ENCODE measurements at regions of chr1 and their contacts with region 1.

Region 1: DNA sequence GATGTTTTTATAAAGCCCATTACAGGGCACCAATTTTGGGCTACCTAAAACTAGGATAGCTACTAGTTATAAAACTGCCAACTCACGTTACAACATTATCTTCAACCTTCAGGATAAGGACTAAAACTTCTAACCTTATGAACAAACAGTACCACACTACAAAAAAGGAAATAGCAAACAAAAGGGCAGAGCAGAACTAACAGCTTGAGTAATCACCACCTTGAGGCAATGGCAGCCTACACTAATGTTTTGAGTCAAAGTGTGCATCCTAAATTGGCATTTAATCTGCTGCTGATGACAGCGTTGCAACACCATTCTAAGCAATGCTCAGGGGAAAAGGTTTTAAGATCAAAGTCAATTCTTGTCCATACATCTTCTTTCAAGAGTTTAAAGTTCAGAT is 27.2 kb downstream of the PTP4A2 start:
- DNase-seq: peak; percentile 48
- H3K4me3 Mint-ChIP-seq: no peak overlapping the region
- H3K27ac Mint-ChIP-seq: peak overlapping the region; percentile 66
- H3K4me1 Mint-ChIP-seq: peaks cover 6% of the 10 kb centered on the region
- H3K27me3 Mint-ChIP-seq: no peaks in the 10 kb centered on the region
- CTCF ChIP-seq: no peak

Region 2: GRCh38 chr1:31897526-31898100 is 13.3 kb before region 1 on chr1:
- CTCF ChIA-PET with region 1: no interaction called
- POLR2A ChIA-PET with region 1: interaction called, 24 read pairs
- intact Hi-C with region 1: no loop called
- DNase-seq: no peak
- H3K4me3 Mint-ChIP-seq: no peak overlapping the region
- H3K27ac Mint-ChIP-seq: peak overlapping the region; percentile 57
- H3K4me1 Mint-ChIP-seq: peaks cover 11% of the 10 kb centered on the region
- H3K27me3 Mint-ChIP-seq: no peaks in the 10 kb centered on the region
- CTCF ChIP-seq: no peak

Region 3: GRCh38 chr1:31955917-31956736 is 45.2 kb after region 1 on chr1:
- CTCF ChIA-PET with region 1: interaction called, 4 read pairs
- POLR2A ChIA-PET with region 1: interaction called, 17 read pairs
- intact Hi-C with region 1: no loop called
- DNase-seq: peak; percentile 99
- H3K4me3 Mint-ChIP-seq: peak overlapping the region; percentile 39
- H3K27ac Mint-ChIP-seq: peak overlapping the region; percentile 100
- H3K4me1 Mint-ChIP-seq: peaks cover 35% of the 10 kb centered on the region
- H3K27me3 Mint-ChIP-seq: no peaks in the 10 kb centered on the region
- CTCF ChIP-seq: no peak

Region 4: DNA sequence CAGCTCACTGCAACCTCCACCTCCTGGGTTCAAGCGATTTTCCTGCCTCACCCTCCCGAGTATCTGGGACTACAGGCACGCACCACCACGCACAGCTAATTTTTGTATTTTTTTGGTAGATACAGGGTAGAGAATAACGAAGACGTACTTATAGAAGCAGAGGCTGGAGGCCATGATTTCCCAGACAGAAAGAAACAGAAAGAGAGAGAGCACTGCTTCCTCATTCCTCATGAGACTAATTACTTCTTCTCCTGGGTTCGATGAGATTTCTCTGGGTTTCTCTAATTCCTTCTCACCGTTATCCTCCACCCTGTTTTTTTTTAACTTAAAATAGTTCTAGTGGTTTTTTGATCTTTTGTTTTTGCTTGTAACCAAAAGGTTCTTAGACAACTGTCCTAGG is 50.6 kb after region 1 on chr1:
- CTCF ChIA-PET with region 1: interaction called, 17 read pairs
- POLR2A ChIA-PET with region 1: interaction called, 17 read pairs
- intact Hi-C with region 1: no loop called
- DNase-seq: no peak
- H3K4me3 Mint-ChIP-seq: no peak overlapping the region
- H3K27ac Mint-ChIP-seq: no peak overlapping the region
- H3K4me1 Mint-ChIP-seq: peaks cover 11% of the 10 kb centered on the region
- H3K27me3 Mint-ChIP-seq: no peaks in the 10 kb centered on the region
- CTCF ChIP-seq: no peak

Region 5: DNA sequence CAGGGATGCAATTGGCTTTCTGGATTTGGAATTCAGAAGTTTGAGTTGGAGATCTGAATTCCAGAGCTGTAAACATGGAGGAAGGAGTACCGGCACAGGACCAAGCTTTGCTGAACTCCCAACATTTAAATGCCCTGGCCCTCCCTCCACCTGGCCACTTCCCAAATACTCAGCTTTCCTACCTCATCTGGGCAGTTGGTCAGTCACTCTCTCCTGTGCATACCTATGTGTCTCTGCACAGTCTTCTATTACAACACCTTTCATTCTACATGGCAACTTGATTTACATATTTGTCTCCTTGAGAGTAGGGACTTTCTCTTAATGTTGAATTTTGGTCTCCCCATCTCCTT is 96.6 kb after region 1 on chr1:
- CTCF ChIA-PET with region 1: no interaction called
- POLR2A ChIA-PET with region 1: no interaction called
- intact Hi-C with region 1: no loop called
- DNase-seq: no peak
- H3K4me3 Mint-ChIP-seq: no peak overlapping the region
- H3K27ac Mint-ChIP-seq: no peak overlapping the region
- H3K4me1 Mint-ChIP-seq: peaks cover 10% of the 10 kb centered on the region
- H3K27me3 Mint-ChIP-seq: no peaks in the 10 kb centered on the region
- CTCF ChIP-seq: no peak

Measured in MCF 10A (cell line).